ENCODE measurements at regions of chr4 and their contacts with region 1.

Region 1: DNA sequence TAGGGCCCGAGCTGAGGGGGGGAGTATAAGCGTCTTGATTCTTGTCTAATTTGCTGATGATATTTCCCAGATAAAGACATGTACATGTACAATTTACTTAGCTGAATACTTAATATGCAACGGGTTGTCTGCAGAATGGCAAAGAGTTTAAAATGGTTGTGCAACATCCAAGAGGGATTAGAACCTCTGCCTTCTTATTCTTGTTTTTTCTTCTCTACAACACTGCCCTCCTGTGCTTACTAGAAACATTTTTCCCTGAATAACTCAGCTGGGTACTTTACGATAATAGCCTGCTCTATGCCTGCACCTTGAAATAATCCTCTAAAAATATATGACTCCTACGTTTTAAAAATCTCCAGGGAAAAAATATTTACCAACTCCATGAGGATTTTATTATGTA is 41.8 kb downstream of the INTS12 start:
- DNase-seq: no peak

Region 2: GRCh38 chr4:105520817-105521790 is 145.6 kb before region 1 on chr4:
- intact Hi-C with region 1: loop called in 1 of 2 experiments (anchors 5 kb)
- DNase-seq: no peak

Region 3: GRCh38 chr4:105620640-105621323 is 45.9 kb before region 1 on chr4:
- intact Hi-C with region 1: no loop called
- DNase-seq: no peak